ENCODE measurements at regions of chr4 and their contacts with region 1.

Region 1: DNA sequence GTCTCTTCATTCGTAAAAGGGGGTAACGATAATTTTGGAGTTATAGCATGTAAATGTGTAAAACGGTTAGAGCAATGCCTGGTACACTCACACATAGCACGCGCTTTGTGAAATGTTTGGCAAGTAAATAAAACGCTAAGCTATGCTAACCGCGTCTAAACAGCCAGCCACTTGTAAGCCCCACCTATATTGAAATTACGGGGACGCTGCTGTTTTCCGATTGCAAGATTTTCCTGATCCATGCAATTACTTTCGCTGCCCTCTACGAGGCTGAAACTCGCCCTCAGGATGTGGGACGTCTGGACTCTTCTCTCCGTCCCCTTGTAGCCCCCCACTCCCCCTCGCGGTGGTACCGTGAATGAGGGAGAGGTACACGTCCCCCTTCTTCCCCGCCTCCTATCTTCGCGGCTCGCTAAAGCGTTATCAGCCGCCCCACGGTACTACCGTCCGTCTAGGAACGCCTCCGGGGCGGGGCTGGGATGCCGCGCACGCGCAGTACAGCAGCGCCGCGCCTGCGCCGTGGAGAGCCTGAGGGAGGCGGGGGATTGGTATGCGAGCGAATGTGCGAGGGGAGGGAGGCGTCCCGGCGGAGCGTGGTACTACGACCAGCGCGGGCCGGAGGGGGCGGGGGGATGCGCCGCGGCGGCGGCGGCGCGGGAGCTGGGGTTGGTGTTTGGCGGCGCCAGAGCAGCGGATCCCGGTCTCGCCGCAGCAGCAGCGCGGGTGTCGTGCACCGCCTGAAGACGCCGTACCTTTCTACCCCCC is at the start of gene STIM2:
- DNase-seq: peak; percentile 95 to 100 (median 99)
- ATAC-seq: peak; percentile 80
- H3K4me3 ChIP-seq: peak within 1 kb of the TSS; percentile 77
- H3K4me3 Mint-ChIP-seq: peak within 1 kb of the TSS; percentile 95 to 100 (median 98)
- H3K27ac ChIP-seq: peak within 1 kb of the TSS; percentile 91
- H3K27ac Mint-ChIP-seq: peak within 1 kb of the TSS; percentile 95 to 99 (median 98)
- H3K4me1 ChIP-seq: peaks cover 46 to 48% of the 10 kb centered on the region in 2 donors
- H3K4me1 Mint-ChIP-seq: peaks cover 47 to 71% (median 66%) of the 10 kb centered on the region in 7 donors
- H3K27me3 ChIP-seq: no peaks in the 10 kb centered on the region
- H3K27me3 Mint-ChIP-seq: peaks cover 0 to 3% (median 0%) of the 10 kb centered on the region in 5 donors
- total RNA-seq, gene STIM2: 61.7 to 103 (median 74.5) TPM

Region 2: GRCh38 chr4:25159884-25160713 is 1700.2 kb before region 1 on chr4 and contains the start of gene SEPSECS:
- CTCF ChIA-PET with region 1: no interaction called
- POLR2A ChIA-PET with region 1: no interaction called
- intact Hi-C with region 1: loop called in 1 of 2 experiments (anchors 5 kb)
- DNase-seq: peak; percentile 82 to 96 (median 94)
- ATAC-seq: peak; percentile 89
- H3K4me3 ChIP-seq: peak within 1 kb of the TSS; percentile 75
- H3K4me3 Mint-ChIP-seq: peak within 1 kb of the TSS; percentile 87 to 97 (median 94)
- H3K27ac ChIP-seq: peak within 1 kb of the TSS; percentile 97
- H3K27ac Mint-ChIP-seq: peak within 1 kb of the TSS; percentile 93 to 98 (median 96)
- H3K4me1 ChIP-seq: peaks cover 4 to 14% of the 10 kb centered on the region in 2 donors
- H3K4me1 Mint-ChIP-seq: peaks cover 33 to 66% (median 52%) of the 10 kb centered on the region in 7 donors
- H3K27me3 ChIP-seq: no peaks in the 10 kb centered on the region
- H3K27me3 Mint-ChIP-seq: peaks cover 0 to 2% (median 0%) of the 10 kb centered on the region in 5 donors
- total RNA-seq, gene SEPSECS: 14.4 to 25.0 (median 17.2) TPM

Region 3: DNA sequence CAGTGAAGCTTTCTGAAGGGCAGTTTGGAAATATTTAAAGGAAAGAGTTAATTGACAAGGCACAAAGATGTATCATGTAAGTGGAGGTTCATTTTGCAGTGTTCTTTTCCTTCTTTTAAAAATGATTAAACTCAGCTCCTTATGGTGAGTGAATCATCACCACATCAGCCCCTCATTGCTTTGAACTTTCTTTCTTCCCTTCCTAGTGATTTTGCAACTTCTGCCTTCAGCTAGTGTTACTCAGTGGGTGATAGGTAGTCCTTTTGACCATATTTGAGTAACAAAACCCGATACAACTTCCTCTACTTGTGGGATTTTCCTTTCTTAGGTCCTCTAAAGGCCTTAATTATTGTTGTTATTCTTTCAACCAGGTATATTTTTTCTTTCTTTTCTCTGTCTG is 1539.6 kb before region 1 on chr4:
- CTCF ChIA-PET with region 1: no interaction called
- POLR2A ChIA-PET with region 1: no interaction called
- intact Hi-C with region 1: no loop called
- DNase-seq: no peak
- ATAC-seq: peak; percentile 62
- H3K4me3 ChIP-seq: no peak overlapping the region
- H3K4me3 Mint-ChIP-seq: peak overlapping the region in 1 of 10 donors; percentile 34
- H3K27ac ChIP-seq: no peak overlapping the region
- H3K27ac Mint-ChIP-seq: peak overlapping the region in 2 of 9 donors; percentile 57 to 64
- H3K4me1 ChIP-seq: no peaks in the 10 kb centered on the region
- H3K4me1 Mint-ChIP-seq: peaks cover 2 to 32% (median 11%) of the 10 kb centered on the region in 7 donors
- H3K27me3 ChIP-seq: no peaks in the 10 kb centered on the region
- H3K27me3 Mint-ChIP-seq: no peaks in the 10 kb centered on the region

Region 4: GRCh38 chr4:25862411-25863346 is 997.7 kb before region 1 on chr4 and contains the start of gene SEL1L3:
- CTCF ChIA-PET with region 1: no interaction called
- POLR2A ChIA-PET with region 1: no interaction called
- intact Hi-C with region 1: loop called (anchors 2 to 5 kb)
- DNase-seq: peak in 8 of 9 donors; percentile 13 to 77 (median 29)
- ATAC-seq: peak; percentile 59
- H3K4me3 ChIP-seq: peak within 1 kb of the TSS; percentile 68
- H3K4me3 Mint-ChIP-seq: peak within 1 kb of the TSS; percentile 94 to 100 (median 98)
- H3K27ac ChIP-seq: peak within 1 kb of the TSS; percentile 71
- H3K27ac Mint-ChIP-seq: peak within 1 kb of the TSS; percentile 88 to 99 (median 96)
- H3K4me1 ChIP-seq: peaks cover 30 to 32% of the 10 kb centered on the region in 2 donors
- H3K4me1 Mint-ChIP-seq: peaks cover 32 to 44% (median 39%) of the 10 kb centered on the region in 7 donors
- H3K27me3 ChIP-seq: no peaks in the 10 kb centered on the region
- H3K27me3 Mint-ChIP-seq: peaks cover 0 to 3% (median 0%) of the 10 kb centered on the region in 5 donors
- total RNA-seq, gene SEL1L3: 38.1 to 55.8 (median 47.0) TPM

Region 5: DNA sequence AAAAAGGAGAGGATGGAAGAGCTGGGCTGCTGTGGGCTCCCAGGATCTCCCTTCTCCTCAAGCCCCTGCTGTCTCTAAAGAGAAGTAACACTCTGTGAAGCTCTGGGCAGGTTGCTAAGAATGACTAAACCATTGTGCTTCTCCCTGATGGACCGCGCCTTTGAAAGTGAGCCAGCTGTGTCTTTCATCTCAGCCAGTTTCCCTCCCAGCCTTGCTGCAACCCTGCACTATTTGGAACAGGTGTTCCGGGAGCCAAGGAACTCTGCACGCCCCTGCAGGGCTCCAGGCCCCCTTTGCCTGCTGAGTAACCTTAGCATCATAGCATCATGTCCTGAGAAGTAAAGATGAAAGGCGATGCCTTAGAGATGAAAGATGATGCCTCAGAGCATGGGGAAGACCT is 906.6 kb before region 1 on chr4:
- CTCF ChIA-PET with region 1: no interaction called
- POLR2A ChIA-PET with region 1: no interaction called
- intact Hi-C with region 1: no loop called
- DNase-seq: no peak
- ATAC-seq: no peak
- H3K4me3 ChIP-seq: no peak overlapping the region
- H3K4me3 Mint-ChIP-seq: no peak overlapping the region
- H3K27ac ChIP-seq: no peak overlapping the region
- H3K27ac Mint-ChIP-seq: no peak overlapping the region
- H3K4me1 ChIP-seq: peaks cover 0 to 5% of the 10 kb centered on the region in 2 donors
- H3K4me1 Mint-ChIP-seq: peaks cover 6 to 18% (median 12%) of the 10 kb centered on the region in 7 donors
- H3K27me3 ChIP-seq: no peaks in the 10 kb centered on the region
- H3K27me3 Mint-ChIP-seq: peaks cover 17 to 43% (median 21%) of the 10 kb centered on the region in 5 donors

Region 6: DNA sequence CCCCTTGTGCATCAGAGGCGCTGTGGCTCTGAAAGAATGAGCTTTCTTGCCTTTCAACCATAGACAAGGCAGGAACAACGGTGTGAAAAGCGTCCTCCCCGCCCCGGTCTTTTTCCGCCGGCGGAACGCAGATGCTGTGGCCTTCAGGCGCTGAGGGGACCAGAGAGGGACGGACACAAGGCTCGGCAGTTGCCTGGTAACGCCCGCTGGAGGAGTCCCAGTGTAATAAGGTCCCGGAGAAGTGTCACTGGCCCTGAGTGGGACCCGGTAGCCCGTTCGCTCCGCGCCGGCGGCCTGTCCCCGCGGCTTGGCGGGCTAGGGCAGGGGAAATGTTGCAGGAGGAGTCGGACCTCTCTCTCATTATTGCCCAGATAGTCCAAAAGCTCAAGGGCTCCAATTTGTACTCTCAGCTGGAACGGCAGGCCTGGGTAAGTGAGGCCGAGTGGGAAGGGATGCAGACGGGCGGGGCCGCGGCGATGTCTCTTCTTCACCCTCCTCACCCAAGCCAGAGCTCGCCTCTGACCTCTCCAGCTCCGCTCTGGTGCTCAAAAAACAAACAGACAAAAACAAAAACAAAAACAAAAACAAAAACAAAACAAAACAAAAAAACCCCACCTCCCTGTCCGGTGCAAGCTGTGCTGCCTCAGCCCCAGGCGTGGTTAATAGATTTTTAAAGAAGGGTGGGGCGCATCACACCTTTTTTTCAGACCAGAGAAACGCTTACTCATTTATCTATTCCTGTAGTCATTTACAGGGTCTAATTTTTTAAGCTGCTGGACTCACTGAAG is 276.3 kb before region 1 on chr4 and contains the start of gene TBC1D19:
- CTCF ChIA-PET with region 1: no interaction called
- POLR2A ChIA-PET with region 1: interaction called, 25 read pairs
- intact Hi-C with region 1: loop called (anchors 1 kb)
- DNase-seq: peak; percentile 77 to 92 (median 87)
- ATAC-seq: peak; percentile 96
- H3K4me3 ChIP-seq: peak within 1 kb of the TSS; percentile 83
- H3K4me3 Mint-ChIP-seq: peak within 1 kb of the TSS; percentile 86 to 98 (median 95)
- H3K27ac ChIP-seq: peak within 1 kb of the TSS; percentile 92
- H3K27ac Mint-ChIP-seq: peak within 1 kb of the TSS; percentile 96 to 100 (median 98)
- H3K4me1 ChIP-seq: peaks cover 10 to 11% of the 10 kb centered on the region in 2 donors
- H3K4me1 Mint-ChIP-seq: peaks cover 10 to 51% (median 28%) of the 10 kb centered on the region in 7 donors
- H3K27me3 ChIP-seq: no peaks in the 10 kb centered on the region
- H3K27me3 Mint-ChIP-seq: peaks cover 0 to 5% (median 0%) of the 10 kb centered on the region in 5 donors
- total RNA-seq, gene TBC1D19: 4.9 to 8.7 (median 6.4) TPM

Region 7: DNA sequence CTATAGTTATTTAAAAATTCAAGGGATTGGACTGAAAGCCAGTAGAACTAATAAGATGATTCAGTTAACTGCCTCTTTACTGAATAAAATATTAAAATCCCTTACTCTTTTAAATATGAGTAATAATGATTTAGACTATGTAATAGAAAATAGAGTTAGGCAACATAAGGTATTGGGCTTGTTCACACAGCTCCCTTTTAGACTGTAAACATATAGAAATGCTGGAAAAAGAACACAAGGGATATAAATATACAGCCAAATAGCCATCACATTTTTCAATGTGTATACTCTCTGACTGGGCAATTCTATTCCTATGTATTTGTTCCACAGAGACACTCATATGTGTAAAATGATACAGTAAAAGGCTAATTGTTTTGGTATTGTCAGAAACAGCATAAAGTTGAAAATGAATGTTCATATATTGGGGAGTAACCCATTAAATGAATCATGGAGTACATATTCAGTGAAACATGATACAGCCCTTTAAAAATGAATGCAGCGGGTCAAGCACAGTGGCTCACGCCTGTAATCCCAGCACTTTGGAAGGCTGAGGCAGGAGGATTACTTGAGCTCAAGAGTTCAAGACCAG is 146.7 kb before region 1 on chr4:
- CTCF ChIA-PET with region 1: no interaction called
- POLR2A ChIA-PET with region 1: no interaction called
- intact Hi-C with region 1: no loop called
- DNase-seq: no peak
- ATAC-seq: no peak
- H3K4me3 ChIP-seq: no peak overlapping the region
- H3K4me3 Mint-ChIP-seq: no peak overlapping the region
- H3K27ac ChIP-seq: no peak overlapping the region
- H3K27ac Mint-ChIP-seq: no peak overlapping the region
- H3K4me1 ChIP-seq: no peaks in the 10 kb centered on the region
- H3K4me1 Mint-ChIP-seq: peaks cover 0 to 2% (median 0%) of the 10 kb centered on the region in 7 donors
- H3K27me3 ChIP-seq: no peaks in the 10 kb centered on the region
- H3K27me3 Mint-ChIP-seq: no peaks in the 10 kb centered on the region

Region 8: GRCh38 chr4:26746802-26747213 is 113.5 kb before region 1 on chr4:
- CTCF ChIA-PET with region 1: no interaction called
- POLR2A ChIA-PET with region 1: no interaction called
- intact Hi-C with region 1: no loop called
- DNase-seq: peak in 1 of 9 donors; percentile 37
- ATAC-seq: peak; percentile 42
- H3K4me3 ChIP-seq: no peak overlapping the region
- H3K4me3 Mint-ChIP-seq: no peak overlapping the region
- H3K27ac ChIP-seq: no peak overlapping the region
- H3K27ac Mint-ChIP-seq: no peak overlapping the region
- H3K4me1 ChIP-seq: no peaks in the 10 kb centered on the region
- H3K4me1 Mint-ChIP-seq: peaks cover 0 to 15% (median 0%) of the 10 kb centered on the region in 7 donors
- H3K27me3 ChIP-seq: no peaks in the 10 kb centered on the region
- H3K27me3 Mint-ChIP-seq: peaks cover 0 to 24% (median 0%) of the 10 kb centered on the region in 5 donors

Region 9: GRCh38 chr4:26878794-26879391 is 18.6 kb after region 1 on chr4:
- CTCF ChIA-PET with region 1: interaction called, 30 read pairs
- POLR2A ChIA-PET with region 1: interaction called, 126 read pairs
- intact Hi-C with region 1: loop called in 1 of 2 experiments (anchors 1 kb)
- DNase-seq: no peak
- ATAC-seq: peak; percentile 32
- H3K4me3 ChIP-seq: no peak overlapping the region
- H3K4me3 Mint-ChIP-seq: peak overlapping the region; percentile 10 to 63 (median 56)
- H3K27ac ChIP-seq: peak overlapping the region; percentile 62
- H3K27ac Mint-ChIP-seq: peak overlapping the region; percentile 65 to 95 (median 85)
- H3K4me1 ChIP-seq: peaks cover 38 to 50% of the 10 kb centered on the region in 2 donors
- H3K4me1 Mint-ChIP-seq: peaks cover 45 to 95% (median 86%) of the 10 kb centered on the region in 7 donors
- H3K27me3 ChIP-seq: no peaks in the 10 kb centered on the region
- H3K27me3 Mint-ChIP-seq: no peaks in the 10 kb centered on the region

Region 10: GRCh38 chr4:26936284-26937065 is 76.1 kb after region 1 on chr4:
- CTCF ChIA-PET with region 1: no interaction called
- POLR2A ChIA-PET with region 1: interaction called, 5 read pairs
- intact Hi-C with region 1: loop called in 1 of 2 experiments (anchors 2 kb)
- DNase-seq: no peak
- ATAC-seq: peak; percentile 54
- H3K4me3 ChIP-seq: no peak overlapping the region
- H3K4me3 Mint-ChIP-seq: peak overlapping the region in 6 of 10 donors; percentile 4 to 34 (median 12)
- H3K27ac ChIP-seq: no peak overlapping the region
- H3K27ac Mint-ChIP-seq: peak overlapping the region in 7 of 9 donors; percentile 3 to 72 (median 54)
- H3K4me1 ChIP-seq: peaks cover 13 to 17% of the 10 kb centered on the region in 2 donors
- H3K4me1 Mint-ChIP-seq: peaks cover 32 to 88% (median 81%) of the 10 kb centered on the region in 7 donors
- H3K27me3 ChIP-seq: no peaks in the 10 kb centered on the region
- H3K27me3 Mint-ChIP-seq: no peaks in the 10 kb centered on the region

Region 11: DNA sequence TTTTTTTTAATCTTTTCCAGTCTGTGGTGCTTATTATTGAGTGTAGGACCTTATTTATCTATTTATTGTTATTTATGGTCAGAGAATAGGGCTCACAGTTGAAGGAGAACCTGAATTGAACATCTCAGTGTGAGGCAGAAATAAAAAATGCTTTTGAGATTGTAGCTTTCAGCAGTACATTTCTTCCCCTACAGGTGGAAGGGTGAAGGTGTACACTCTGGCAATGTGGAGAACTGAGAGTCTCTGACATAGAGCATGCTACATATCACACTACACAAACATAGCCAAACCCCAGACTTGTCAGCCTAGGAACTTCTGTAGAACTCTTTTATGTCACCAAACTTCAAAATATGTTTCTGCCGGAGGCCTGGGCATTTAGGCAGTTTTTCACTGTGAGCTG is 140.5 kb after region 1 on chr4:
- CTCF ChIA-PET with region 1: interaction called, 4 read pairs
- POLR2A ChIA-PET with region 1: interaction called, 25 read pairs
- intact Hi-C with region 1: loop called (anchors 1 to 2 kb)
- DNase-seq: peak in 6 of 9 donors; percentile 15 to 44 (median 32)
- ATAC-seq: peak; percentile 86
- H3K4me3 ChIP-seq: no peak overlapping the region
- H3K4me3 Mint-ChIP-seq: no peak overlapping the region
- H3K27ac ChIP-seq: no peak overlapping the region
- H3K27ac Mint-ChIP-seq: peak overlapping the region in 8 of 9 donors; percentile 33 to 78 (median 62)
- H3K4me1 ChIP-seq: peaks cover 12 to 16% of the 10 kb centered on the region in 2 donors
- H3K4me1 Mint-ChIP-seq: peaks cover 19 to 65% (median 53%) of the 10 kb centered on the region in 7 donors
- H3K27me3 ChIP-seq: no peaks in the 10 kb centered on the region
- H3K27me3 Mint-ChIP-seq: no peaks in the 10 kb centered on the region